ENCODE measurements at regions of chr15 and their contacts with region 1.

Region 1: GRCh38 chr15:51550841-51551240 is 71.7 kb downstream of the DMXL2 start:
- DNase-seq: no peak
- ATAC-seq: no peak
- H3K4me3 ChIP-seq: no peak overlapping the region
- H3K4me3 Mint-ChIP-seq: no peak overlapping the region
- H3K27ac ChIP-seq: no peak overlapping the region
- H3K27ac Mint-ChIP-seq: no peak overlapping the region
- H3K4me1 ChIP-seq: no peaks in the 10 kb centered on the region
- H3K4me1 Mint-ChIP-seq: no peaks in the 10 kb centered on the region
- H3K27me3 ChIP-seq: no peaks in the 10 kb centered on the region
- H3K27me3 Mint-ChIP-seq: no peaks in the 10 kb centered on the region
- CTCF ChIP-seq: no peak

Region 2: GRCh38 chr15:51499379-51499976 is 51.4 kb before region 1 on chr15:
- CTCF ChIA-PET with region 1: no interaction called
- POLR2A ChIA-PET with region 1: no interaction called
- intact Hi-C with region 1: loop called in 1 of 2 experiments (anchors 5 kb)
- DNase-seq: peak in 1 of 14 experiments; percentile 5
- ATAC-seq: no peak
- H3K4me3 ChIP-seq: no peak overlapping the region
- H3K4me3 Mint-ChIP-seq: no peak overlapping the region
- H3K27ac ChIP-seq: no peak overlapping the region
- H3K27ac Mint-ChIP-seq: no peak overlapping the region
- H3K4me1 ChIP-seq: no peaks in the 10 kb centered on the region
- H3K4me1 Mint-ChIP-seq: no peaks in the 10 kb centered on the region
- H3K27me3 ChIP-seq: no peaks in the 10 kb centered on the region
- H3K27me3 Mint-ChIP-seq: no peaks in the 10 kb centered on the region
- CTCF ChIP-seq: no peak